CD4-positive, alpha-beta memory T cell (primary cell): ENCODE measurements at regions of chr19 and their contacts with region 1.

Region 1: DNA sequence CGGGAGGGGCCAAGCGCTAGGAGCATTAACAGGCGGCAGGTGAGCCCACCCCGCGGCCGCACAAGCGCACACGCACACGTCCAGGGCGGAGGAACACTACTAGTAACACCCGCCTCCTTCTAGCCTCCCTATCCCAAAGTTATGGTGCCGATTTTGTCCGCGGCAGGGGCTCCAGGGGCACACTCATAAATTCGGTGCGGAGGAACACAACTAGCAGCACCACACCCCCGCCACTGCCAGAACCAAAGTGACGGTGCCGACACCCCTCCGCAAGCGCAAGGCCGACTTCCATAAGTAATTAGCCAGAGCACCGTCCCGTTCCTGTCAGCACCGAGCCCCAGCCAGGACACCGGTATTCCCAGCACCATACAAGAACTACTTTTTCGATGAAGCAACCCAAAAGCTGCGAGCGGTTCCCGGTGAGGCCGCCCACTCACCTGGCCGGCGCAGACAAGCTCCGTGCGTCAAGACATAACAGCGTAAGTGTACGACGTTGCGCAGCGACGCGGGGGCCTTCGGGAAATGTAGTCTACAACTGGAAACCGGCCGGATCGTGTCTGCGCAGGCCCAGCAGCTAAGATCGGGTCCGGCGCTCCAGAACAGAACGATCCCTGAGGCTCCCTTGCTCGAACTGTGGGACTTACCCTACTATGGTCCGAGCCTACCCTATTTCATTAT is at the starts of genes ZNF540 and ZNF571:
- DNase-seq: peak; percentile 88 to 96 (median 92)
- H3K4me3 ChIP-seq: peak within 1 kb of the TSS; percentile 91 to 92
- H3K4me3 Mint-ChIP-seq: peak within 1 kb of the TSS; percentile 94 to 99 (median 97)
- H3K27ac ChIP-seq: peak within 1 kb of the TSS; percentile 98
- H3K27ac Mint-ChIP-seq: peak within 1 kb of the TSS; percentile 97 to 99 (median 99)
- H3K4me1 ChIP-seq: peaks cover 24% of the 10 kb centered on the region
- H3K4me1 Mint-ChIP-seq: peaks cover 21 to 47% (median 30%) of the 10 kb centered on the region in 4 donors
- H3K27me3 ChIP-seq: no peaks in the 10 kb centered on the region
- H3K27me3 Mint-ChIP-seq: no peaks in the 10 kb centered on the region
- total RNA-seq, gene ZNF540: 24.2 to 24.5 TPM
- total RNA-seq, gene ZNF571: 10.1 to 14.2 TPM

Region 2: GRCh38 chr19:36973021-36973843 is 621.2 kb before region 1 on chr19:
- CTCF ChIA-PET with region 1: no interaction called
- POLR2A ChIA-PET with region 1: no interaction called
- intact Hi-C with region 1: loop called (anchors 1 kb)
- DNase-seq: peak; percentile 76 to 85 (median 77)
- H3K4me3 ChIP-seq: peak overlapping the region; percentile 80 to 86
- H3K4me3 Mint-ChIP-seq: peak overlapping the region; percentile 91 to 98 (median 96)
- H3K27ac ChIP-seq: peak overlapping the region; percentile 68
- H3K27ac Mint-ChIP-seq: peak overlapping the region; percentile 82 to 97 (median 94)
- H3K4me1 ChIP-seq: peaks cover 16% of the 10 kb centered on the region
- H3K4me1 Mint-ChIP-seq: peaks cover 8 to 22% (median 12%) of the 10 kb centered on the region in 4 donors
- H3K27me3 ChIP-seq: no peaks in the 10 kb centered on the region
- H3K27me3 Mint-ChIP-seq: no peaks in the 10 kb centered on the region

Region 3: DNA sequence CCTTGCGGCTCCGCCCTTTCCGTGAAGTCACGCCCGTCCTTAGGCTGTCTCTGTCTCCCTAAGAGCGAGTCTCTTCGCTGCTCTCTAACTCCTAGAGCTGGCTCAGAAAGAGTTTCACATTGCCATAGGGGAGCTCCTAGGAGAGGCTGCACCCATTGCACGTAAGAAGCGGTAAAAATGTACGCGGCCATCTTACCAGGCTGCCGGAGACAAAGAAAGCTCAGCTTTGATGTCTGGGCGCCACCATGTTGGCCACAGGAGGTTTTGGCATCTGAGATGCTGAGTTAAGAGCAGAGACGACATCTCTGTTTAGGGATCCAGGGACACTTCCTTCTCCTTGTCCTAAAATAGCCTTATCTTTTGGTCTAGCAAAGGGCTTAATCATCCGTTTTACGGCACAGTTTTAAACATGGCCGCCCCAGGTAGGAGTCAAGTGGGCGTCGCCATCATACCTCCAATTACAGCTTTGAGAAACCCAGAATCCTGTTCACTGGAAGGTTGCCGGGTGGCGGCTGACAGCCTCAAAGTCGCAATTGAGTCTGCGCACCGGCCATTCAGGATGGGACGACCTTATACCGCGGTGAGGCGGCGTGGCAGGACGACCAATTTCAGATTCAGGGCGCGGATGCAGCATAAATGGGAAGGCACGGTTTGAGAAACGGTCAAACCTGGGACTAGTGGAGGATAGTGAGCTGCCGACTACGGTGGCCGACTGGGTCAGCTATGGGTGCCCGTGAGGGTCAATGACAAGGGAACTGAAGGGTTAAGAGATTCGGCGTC is 87.9 kb before region 1 on chr19 and contains the start of gene ZNF793:
- CTCF ChIA-PET with region 1: interaction called, 5 read pairs
- POLR2A ChIA-PET with region 1: interaction called, 42 read pairs
- intact Hi-C with region 1: loop called (anchors 1 kb)
- DNase-seq: peak; percentile 85 to 88 (median 87)
- H3K4me3 ChIP-seq: peak within 1 kb of the TSS; percentile 57 to 78
- H3K4me3 Mint-ChIP-seq: no peak within 1 kb of the TSS
- H3K27ac ChIP-seq: peak within 1 kb of the TSS; percentile 88
- H3K27ac Mint-ChIP-seq: no peak within 1 kb of the TSS
- H3K4me1 ChIP-seq: peaks cover 17% of the 10 kb centered on the region
- H3K4me1 Mint-ChIP-seq: peaks cover 0 to 2% (median 0%) of the 10 kb centered on the region in 4 donors
- H3K27me3 ChIP-seq: no peaks in the 10 kb centered on the region
- H3K27me3 Mint-ChIP-seq: no peaks in the 10 kb centered on the region
- total RNA-seq, gene ZNF793: 10.2 to 13.8 TPM

Region 4: DNA sequence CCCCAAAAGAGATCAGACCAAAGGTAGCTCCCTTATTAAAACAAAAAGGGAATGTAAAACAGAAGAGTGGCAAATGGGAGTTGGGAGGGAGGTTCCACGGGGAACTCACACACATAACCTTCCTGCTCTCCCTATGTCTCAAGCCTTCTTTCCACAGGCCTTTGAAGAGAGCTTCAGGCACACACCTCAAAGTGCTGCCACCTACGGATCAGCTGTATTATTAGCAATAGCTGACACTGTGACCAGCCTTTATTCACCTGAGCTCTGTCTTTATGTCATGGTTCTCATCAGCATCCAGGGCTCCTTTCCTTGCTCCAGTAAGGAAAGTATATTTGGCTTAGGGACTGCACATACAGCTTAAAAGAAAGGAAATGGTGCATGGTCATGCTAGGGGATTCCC is 11.1 kb before region 1 on chr19:
- CTCF ChIA-PET with region 1: no interaction called
- POLR2A ChIA-PET with region 1: no interaction called
- intact Hi-C with region 1: no loop called
- DNase-seq: no peak
- H3K4me3 ChIP-seq: no peak overlapping the region
- H3K4me3 Mint-ChIP-seq: no peak overlapping the region
- H3K27ac ChIP-seq: no peak overlapping the region
- H3K27ac Mint-ChIP-seq: no peak overlapping the region
- H3K4me1 ChIP-seq: no peaks in the 10 kb centered on the region
- H3K4me1 Mint-ChIP-seq: peaks cover 0 to 6% (median 0%) of the 10 kb centered on the region in 4 donors
- H3K27me3 ChIP-seq: no peaks in the 10 kb centered on the region
- H3K27me3 Mint-ChIP-seq: no peaks in the 10 kb centered on the region

Region 5: DNA sequence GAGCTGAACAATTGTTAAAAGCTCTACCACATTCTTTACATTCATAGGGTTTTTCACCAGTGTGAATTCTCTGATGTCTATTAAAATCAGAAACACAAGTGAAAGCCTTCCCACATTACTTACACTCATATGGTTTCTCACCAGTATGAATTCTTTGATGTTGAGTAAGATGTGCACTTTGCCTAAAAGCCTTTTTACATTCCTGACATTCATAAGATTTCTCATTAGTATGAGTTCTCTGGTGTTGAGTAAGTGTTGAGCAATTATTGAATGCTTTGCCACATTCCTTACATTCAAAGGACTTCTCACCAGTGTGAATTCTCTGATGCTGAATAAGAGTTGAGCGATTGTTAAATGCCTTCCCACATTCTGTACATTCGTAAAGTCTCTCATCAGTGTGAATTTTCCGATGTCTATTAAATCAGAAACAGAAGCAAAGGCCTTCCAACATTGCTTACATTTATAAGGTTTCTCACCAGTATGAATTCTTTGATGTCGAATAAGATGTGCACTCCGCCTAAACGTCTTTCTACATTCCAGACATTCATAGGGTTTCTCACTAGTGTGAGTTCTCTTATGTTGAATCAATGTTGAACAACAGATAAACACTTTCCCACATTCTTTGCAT is 75.0 kb after region 1 on chr19:
- CTCF ChIA-PET with region 1: no interaction called
- POLR2A ChIA-PET with region 1: no interaction called
- intact Hi-C with region 1: no loop called
- DNase-seq: no peak
- H3K4me3 ChIP-seq: no peak overlapping the region
- H3K4me3 Mint-ChIP-seq: no peak overlapping the region
- H3K27ac ChIP-seq: no peak overlapping the region
- H3K27ac Mint-ChIP-seq: no peak overlapping the region
- H3K4me1 ChIP-seq: no peaks in the 10 kb centered on the region
- H3K4me1 Mint-ChIP-seq: no peaks in the 10 kb centered on the region
- H3K27me3 ChIP-seq: no peaks in the 10 kb centered on the region
- H3K27me3 Mint-ChIP-seq: no peaks in the 10 kb centered on the region

Region 6: DNA sequence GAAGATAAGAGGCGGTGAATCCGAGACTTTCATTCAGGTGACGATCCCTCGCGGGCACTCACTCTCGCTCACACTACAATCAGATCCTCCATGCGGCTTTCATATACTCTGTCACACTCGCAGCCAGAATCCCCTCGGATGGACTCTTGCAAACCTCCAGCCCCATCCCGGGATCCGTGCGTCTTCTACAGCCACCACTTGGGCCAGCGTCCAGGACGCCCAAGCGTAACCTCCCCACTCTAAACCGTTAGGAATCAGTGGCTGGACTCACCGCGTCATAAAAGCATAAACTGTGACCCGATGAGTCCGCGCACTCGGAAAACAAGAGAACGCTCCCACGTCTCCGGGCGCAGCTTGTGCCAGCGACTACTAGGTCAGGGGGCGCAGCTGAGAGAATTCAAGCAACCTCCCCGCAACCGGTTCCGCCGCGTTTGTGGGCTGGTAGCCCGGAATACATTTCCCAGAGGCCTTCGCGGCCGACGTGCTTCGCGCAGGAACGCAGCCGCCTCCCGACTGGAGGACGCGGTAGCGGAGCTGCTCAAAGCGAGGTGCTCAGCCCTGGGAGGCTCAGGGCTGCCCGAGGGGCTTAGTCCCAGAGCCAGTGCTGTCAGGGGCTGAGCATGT is 97.5 kb after region 1 on chr19:
- CTCF ChIA-PET with region 1: no interaction called
- POLR2A ChIA-PET with region 1: interaction called, 16 read pairs
- intact Hi-C with region 1: loop called (anchors 1 kb)
- DNase-seq: peak; percentile 70 to 78 (median 73)
- H3K4me3 ChIP-seq: peak overlapping the region; percentile 61 to 80
- H3K4me3 Mint-ChIP-seq: peak overlapping the region; percentile 84 to 98 (median 95)
- H3K27ac ChIP-seq: peak overlapping the region; percentile 49
- H3K27ac Mint-ChIP-seq: peak overlapping the region; percentile 79 to 97 (median 93)
- H3K4me1 ChIP-seq: peaks cover 6% of the 10 kb centered on the region
- H3K4me1 Mint-ChIP-seq: peaks cover 4 to 22% (median 10%) of the 10 kb centered on the region in 4 donors
- H3K27me3 ChIP-seq: no peaks in the 10 kb centered on the region
- H3K27me3 Mint-ChIP-seq: no peaks in the 10 kb centered on the region

Region 7: GRCh38 chr19:37779127-37780005 is 184.9 kb after region 1 on chr19 and contains the start of gene ZNF573:
- CTCF ChIA-PET with region 1: no interaction called
- POLR2A ChIA-PET with region 1: interaction called, 15 read pairs
- intact Hi-C with region 1: loop called (anchors 1 kb)
- DNase-seq: peak; percentile 87 to 99 (median 91)
- H3K4me3 ChIP-seq: peak within 1 kb of the TSS; percentile 74 to 89
- H3K4me3 Mint-ChIP-seq: peak within 1 kb of the TSS; percentile 90 to 99 (median 94)
- H3K27ac ChIP-seq: peak within 1 kb of the TSS; percentile 90
- H3K27ac Mint-ChIP-seq: peak within 1 kb of the TSS; percentile 86 to 100 (median 98)
- H3K4me1 ChIP-seq: peaks cover 18% of the 10 kb centered on the region
- H3K4me1 Mint-ChIP-seq: peaks cover 24 to 46% (median 35%) of the 10 kb centered on the region in 4 donors
- H3K27me3 ChIP-seq: no peaks in the 10 kb centered on the region
- H3K27me3 Mint-ChIP-seq: no peaks in the 10 kb centered on the region
- total RNA-seq, gene ZNF573: 30.5 to 31.1 TPM